ENCODE measurements at regions of chr6 and their contacts with region 1.

Region 1: GRCh38 chr6:53492860-53493634 is 51.9 kb downstream of the GCLC start:
- DNase-seq: peak; percentile 40 to 74
- ATAC-seq: peak; percentile 80 to 82
- H3K4me3 ChIP-seq: peak overlapping the region; percentile 40
- H3K27ac ChIP-seq: peak overlapping the region; percentile 75 to 84
- H3K4me1 ChIP-seq: peaks cover 43% of the 10 kb centered on the region
- CTCF ChIP-seq: peak; percentile 80
- EP300 ChIP-seq: no peak
- POLR2A ChIP-seq: no peak
- RAD21 ChIP-seq: peak; percentile 77 to 80

Region 2: DNA sequence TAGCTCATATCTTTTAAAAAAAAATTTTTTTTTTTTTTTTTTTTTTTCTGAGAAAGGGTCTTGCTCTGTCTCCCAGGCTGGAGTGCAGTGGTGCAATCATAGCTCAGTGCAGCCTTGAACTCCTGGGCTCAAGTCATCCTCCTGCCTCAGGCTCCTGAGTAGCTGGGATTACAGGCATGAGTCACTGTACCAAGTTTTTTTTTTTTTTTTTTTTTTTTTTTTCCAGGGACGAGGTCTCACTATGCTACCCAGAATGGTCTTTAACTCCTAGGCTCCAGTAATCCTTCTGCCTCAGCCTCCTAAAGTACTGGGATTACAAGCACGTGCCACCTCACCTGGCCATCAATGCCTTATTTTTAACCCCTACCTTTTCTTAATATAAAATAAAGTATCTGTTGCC is 24.0 kb after region 1 on chr6:
- CTCF ChIA-PET with region 1: interaction called, 13 read pairs
- POLR2A ChIA-PET with region 1: interaction called, 6 read pairs
- DNase-seq: peak in 1 of 2 experiments; percentile 48
- ATAC-seq: peak in 1 of 2 experiments; percentile 70; a peak in 4 of 6 replicates
- H3K4me3 ChIP-seq: no peak overlapping the region
- H3K27ac ChIP-seq: peak overlapping the region; percentile 7 to 70; a peak in 4 of 6 replicates
- H3K4me1 ChIP-seq: peaks cover 73% of the 10 kb centered on the region
- CTCF ChIP-seq: no peak
- EP300 ChIP-seq: no peak
- POLR2A ChIP-seq: no peak
- RAD21 ChIP-seq: no peak

Region 3: GRCh38 chr6:53544470-53545308 is 51.6 kb after region 1 on chr6 and contains the start of gene GCLC:
- CTCF ChIA-PET with region 1: interaction called, 14 read pairs
- POLR2A ChIA-PET with region 1: interaction called, 7 read pairs
- DNase-seq: peak; percentile 78 to 94
- ATAC-seq: peak; percentile 64 to 72
- H3K4me3 ChIP-seq: peak within 1 kb of the TSS; percentile 90
- H3K27ac ChIP-seq: peak within 1 kb of the TSS; percentile 95 to 98
- H3K4me1 ChIP-seq: peaks cover 40% of the 10 kb centered on the region
- CTCF ChIP-seq: peak; percentile 78
- EP300 ChIP-seq: peak in 1 of 2 experiments; percentile 28; a peak in 1 of 5 replicates
- POLR2A ChIP-seq: peak; percentile 95
- RAD21 ChIP-seq: peak; percentile 31 to 79; a peak in 4 of 5 replicates
- polyA plus RNA-seq, gene GCLC: 180 and 187 TPM in 2 replicates

Region 4: GRCh38 chr6:53581173-53581773 is 88.2 kb after region 1 on chr6:
- CTCF ChIA-PET with region 1: no interaction called
- POLR2A ChIA-PET with region 1: no interaction called
- DNase-seq: no peak
- ATAC-seq: no peak
- H3K4me3 ChIP-seq: no peak overlapping the region
- H3K27ac ChIP-seq: peak overlapping the region in 1 of 2 experiments; percentile 14; a peak in 1 of 6 replicates
- H3K4me1 ChIP-seq: no peaks in the 10 kb centered on the region; the same call in 2 of the 3 replicates
- CTCF ChIP-seq: no peak
- EP300 ChIP-seq: no peak
- POLR2A ChIP-seq: no peak
- RAD21 ChIP-seq: no peak

Region 5: GRCh38 chr6:53679446-53679933 is 186.4 kb after region 1 on chr6:
- CTCF ChIA-PET with region 1: interaction called, 12 read pairs
- POLR2A ChIA-PET with region 1: no interaction called
- DNase-seq: peak; percentile 52 to 60
- ATAC-seq: peak; percentile 78
- H3K4me3 ChIP-seq: no peak overlapping the region
- H3K27ac ChIP-seq: no peak overlapping the region
- H3K4me1 ChIP-seq: no peaks in the 10 kb centered on the region
- CTCF ChIP-seq: peak; percentile 26
- EP300 ChIP-seq: no peak
- POLR2A ChIP-seq: no peak
- RAD21 ChIP-seq: peak; percentile 43 to 50

Region 6: DNA sequence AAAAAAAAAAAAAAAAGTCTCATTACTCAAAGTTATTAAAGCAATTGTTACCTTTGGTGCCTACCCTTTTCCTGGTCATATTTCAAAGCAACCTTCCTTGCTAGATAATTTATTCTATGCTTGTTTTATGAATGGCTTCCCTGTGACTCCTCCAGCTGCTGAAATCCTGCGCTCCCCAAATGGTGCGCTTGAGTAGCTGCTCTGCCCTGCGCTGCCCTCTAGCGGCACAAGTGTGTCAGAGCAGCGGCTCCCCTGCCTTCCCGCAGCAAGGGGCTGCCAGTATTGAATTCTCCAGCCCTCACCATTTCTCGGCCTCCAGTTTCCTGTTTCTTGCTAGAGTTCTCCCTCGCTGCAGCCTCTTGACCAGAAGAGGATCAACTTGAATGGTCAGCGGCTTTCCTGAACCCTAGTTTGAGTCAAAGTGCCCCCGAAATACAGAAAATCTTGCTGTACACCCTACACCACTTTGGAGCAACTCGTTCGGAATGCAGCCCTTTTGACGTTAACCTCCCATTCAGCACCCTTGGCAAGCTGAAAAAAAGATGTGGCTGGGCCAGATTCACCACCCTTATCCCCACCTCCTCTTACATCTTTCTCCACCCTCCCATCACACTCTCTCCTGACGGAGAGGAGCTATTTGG is 232.9 kb after region 1 on chr6:
- CTCF ChIA-PET with region 1: interaction called, 169 read pairs
- POLR2A ChIA-PET with region 1: no interaction called
- DNase-seq: peak; percentile 66 to 74
- ATAC-seq: peak; percentile 94 to 95
- H3K4me3 ChIP-seq: peak overlapping the region; percentile 40
- H3K27ac ChIP-seq: peak overlapping the region; percentile 31 to 52; a peak in 4 of 6 replicates
- H3K4me1 ChIP-seq: peaks cover 13% of the 10 kb centered on the region; the same call in 2 of the 3 replicates
- CTCF ChIP-seq: peak; percentile 78
- EP300 ChIP-seq: no peak
- POLR2A ChIP-seq: no peak
- RAD21 ChIP-seq: peak; percentile 77 to 80